Activated naive CD4-positive, alpha-beta T cell treated with anti-CD3 and anti-CD28 coated beads, Interleukin-2, amount 10 ng/mL, durations not matched to agents 7 days and 5 days (primary cell): ENCODE measurements at regions of chr13 and their contacts with region 1.

Region 1: DNA sequence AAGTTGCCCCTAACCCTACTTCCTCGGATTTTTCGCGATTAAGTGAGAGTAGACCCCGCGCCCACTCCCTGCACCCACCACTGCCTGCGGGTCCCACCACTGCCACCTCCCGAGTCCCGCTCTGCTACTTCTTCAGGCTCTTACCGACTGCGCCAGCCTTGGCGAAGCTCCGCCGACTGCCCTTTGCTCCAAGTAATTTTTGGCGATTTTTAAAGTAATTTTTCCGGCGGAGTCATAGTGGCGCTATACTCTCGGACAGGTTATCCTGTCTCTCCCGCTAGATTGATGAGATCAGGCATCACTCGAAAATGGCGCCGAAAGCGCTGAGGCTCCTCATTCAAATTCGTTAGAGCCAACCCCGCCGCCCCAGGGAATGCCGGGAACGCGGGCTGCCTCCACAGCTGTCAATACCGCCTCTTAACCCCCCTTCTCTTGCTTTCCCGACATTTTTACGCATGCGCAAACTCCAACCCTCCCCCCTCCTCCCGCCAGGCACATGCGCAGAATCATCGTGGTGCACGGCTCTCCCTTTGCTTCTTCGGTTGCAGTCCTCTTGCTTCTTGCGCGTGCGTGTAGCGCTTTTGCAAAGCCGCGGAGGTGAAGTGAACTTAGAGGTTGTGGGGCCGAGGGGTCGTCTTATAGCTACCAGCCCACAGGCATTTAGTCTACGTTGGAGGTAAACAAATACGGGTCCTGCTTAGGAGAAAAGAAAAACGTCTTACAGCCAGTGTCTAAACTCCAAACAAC is 66.6 kb downstream of the KCNRG start:
- DNase-seq: peak; percentile 99
- H3K4me3 Mint-ChIP-seq: peak overlapping the region; percentile 92
- H3K27ac Mint-ChIP-seq: peak overlapping the region; percentile 100
- H3K4me1 Mint-ChIP-seq: peaks cover 50% of the 10 kb centered on the region
- H3K27me3 Mint-ChIP-seq: no peaks in the 10 kb centered on the region

Region 2: GRCh38 chr13:49996951-49997895 is 84.6 kb before region 1 on chr13 and contains the start of gene TRIM13:
- CTCF ChIA-PET with region 1: interaction called, 15 read pairs
- DNase-seq: peak; percentile 90
- H3K4me3 Mint-ChIP-seq: peak within 1 kb of the TSS; percentile 90
- H3K27ac Mint-ChIP-seq: peak within 1 kb of the TSS; percentile 91
- H3K4me1 Mint-ChIP-seq: peaks cover 42% of the 10 kb centered on the region
- H3K27me3 Mint-ChIP-seq: no peaks in the 10 kb centered on the region

Region 3: GRCh38 chr13:50123862-50124536 is 42.1 kb after region 1 on chr13:
- CTCF ChIA-PET with region 1: interaction called, 27 read pairs
- DNase-seq: peak; percentile 79
- H3K4me3 Mint-ChIP-seq: peak overlapping the region; percentile 87
- H3K27ac Mint-ChIP-seq: peak overlapping the region; percentile 98
- H3K4me1 Mint-ChIP-seq: peaks cover 52% of the 10 kb centered on the region
- H3K27me3 Mint-ChIP-seq: peaks cover 18% of the 10 kb centered on the region

Region 4: GRCh38 chr13:50801087-50801931 is 719.5 kb after region 1 on chr13:
- CTCF ChIA-PET with region 1: interaction called, 10 read pairs
- DNase-seq: peak; percentile 80
- H3K4me3 Mint-ChIP-seq: no peak overlapping the region
- H3K27ac Mint-ChIP-seq: no peak overlapping the region
- H3K4me1 Mint-ChIP-seq: peaks cover 12% of the 10 kb centered on the region
- H3K27me3 Mint-ChIP-seq: peaks cover 16% of the 10 kb centered on the region